ENCODE measurements at regions of chr16 and their contacts with region 1.

Region 1: GRCh38 chr16:89171463-89172170 is at the start of gene CDH15:
- DNase-seq: peak; percentile 99
- ATAC-seq: peak; percentile 88
- H3K4me3 Mint-ChIP-seq: peak within 1 kb of the TSS; percentile 75
- H3K27ac Mint-ChIP-seq: 0 out of 2 replicates have a peak within 1 kb of the TSS, but pooled peaks have one; percentile 2
- H3K4me1 Mint-ChIP-seq: peaks cover 14% of the 10 kb centered on the region
- H3K27me3 Mint-ChIP-seq: peaks cover 6% of the 10 kb centered on the region; the same call in 1 of the 2 replicates
- CTCF ChIP-seq: no peak
- total RNA-seq, gene CDH15: 0.41 to 0.76 TPM (median 0.46 TPM) in 3 replicates

Region 2: GRCh38 chr16:88811769-88812512 is 359.7 kb before region 1 on chr16 and contains the start of gene APRT:
- CTCF ChIA-PET with region 1: interaction called, 47 read pairs
- POLR2A ChIA-PET with region 1: interaction called, 4 read pairs
- DNase-seq: peak; percentile 95
- ATAC-seq: peak; percentile 61
- H3K4me3 Mint-ChIP-seq: peak within 1 kb of the TSS; percentile 87
- H3K27ac Mint-ChIP-seq: peak within 1 kb of the TSS; percentile 98
- H3K4me1 Mint-ChIP-seq: peaks cover 14% of the 10 kb centered on the region
- H3K27me3 Mint-ChIP-seq: no peaks in the 10 kb centered on the region
- CTCF ChIP-seq: no peak
- total RNA-seq, gene APRT: 272 to 288 TPM (median 282 TPM) in 3 replicates

Region 3: DNA sequence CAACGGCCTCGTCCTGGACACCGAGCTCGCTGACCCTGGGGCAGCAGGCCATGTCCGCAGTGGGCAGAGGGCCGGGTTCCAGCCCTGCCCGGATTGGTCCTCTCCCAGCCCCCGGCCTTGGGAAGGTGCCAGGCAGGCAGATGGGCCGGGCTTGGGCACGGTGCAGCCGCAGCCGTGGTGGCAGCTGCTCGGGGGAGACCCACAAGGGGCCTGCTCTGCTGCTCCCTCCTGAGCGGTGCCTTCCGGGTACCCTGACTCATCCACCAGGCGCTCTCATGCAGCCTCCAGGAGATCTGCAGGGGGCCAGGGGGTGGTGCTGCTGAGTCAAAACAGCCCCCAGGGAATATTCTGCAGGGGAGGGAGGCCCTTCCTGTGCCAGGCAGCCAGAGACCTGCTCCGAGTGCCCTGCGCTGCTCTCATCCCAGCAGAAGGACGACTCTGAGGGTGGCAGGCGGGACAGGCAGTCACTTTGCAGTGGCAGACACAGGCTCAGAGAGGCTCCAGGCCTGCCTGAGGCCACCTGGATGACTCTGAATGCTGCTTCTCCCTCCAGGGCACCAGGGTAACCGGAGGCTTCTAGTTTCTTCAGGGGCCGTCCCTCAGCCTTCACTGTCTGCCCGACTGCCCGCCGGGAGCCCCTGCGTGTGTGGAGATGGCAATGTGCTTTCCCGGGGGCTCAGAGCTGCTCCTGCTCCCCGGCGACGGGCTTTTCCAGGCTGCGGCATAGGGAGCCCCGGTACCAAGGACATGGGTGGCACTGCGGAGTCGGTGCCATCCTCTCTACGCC is 246.3 kb before region 1 on chr16:
- CTCF ChIA-PET with region 1: interaction called, 11 read pairs
- POLR2A ChIA-PET with region 1: no interaction called
- DNase-seq: peak; percentile 58
- ATAC-seq: peak; percentile 40
- H3K4me3 Mint-ChIP-seq: no peak overlapping the region
- H3K27ac Mint-ChIP-seq: no peak overlapping the region
- H3K4me1 Mint-ChIP-seq: peaks cover 14% of the 10 kb centered on the region
- H3K27me3 Mint-ChIP-seq: no peaks in the 10 kb centered on the region
- CTCF ChIP-seq: no peak

Region 4: DNA sequence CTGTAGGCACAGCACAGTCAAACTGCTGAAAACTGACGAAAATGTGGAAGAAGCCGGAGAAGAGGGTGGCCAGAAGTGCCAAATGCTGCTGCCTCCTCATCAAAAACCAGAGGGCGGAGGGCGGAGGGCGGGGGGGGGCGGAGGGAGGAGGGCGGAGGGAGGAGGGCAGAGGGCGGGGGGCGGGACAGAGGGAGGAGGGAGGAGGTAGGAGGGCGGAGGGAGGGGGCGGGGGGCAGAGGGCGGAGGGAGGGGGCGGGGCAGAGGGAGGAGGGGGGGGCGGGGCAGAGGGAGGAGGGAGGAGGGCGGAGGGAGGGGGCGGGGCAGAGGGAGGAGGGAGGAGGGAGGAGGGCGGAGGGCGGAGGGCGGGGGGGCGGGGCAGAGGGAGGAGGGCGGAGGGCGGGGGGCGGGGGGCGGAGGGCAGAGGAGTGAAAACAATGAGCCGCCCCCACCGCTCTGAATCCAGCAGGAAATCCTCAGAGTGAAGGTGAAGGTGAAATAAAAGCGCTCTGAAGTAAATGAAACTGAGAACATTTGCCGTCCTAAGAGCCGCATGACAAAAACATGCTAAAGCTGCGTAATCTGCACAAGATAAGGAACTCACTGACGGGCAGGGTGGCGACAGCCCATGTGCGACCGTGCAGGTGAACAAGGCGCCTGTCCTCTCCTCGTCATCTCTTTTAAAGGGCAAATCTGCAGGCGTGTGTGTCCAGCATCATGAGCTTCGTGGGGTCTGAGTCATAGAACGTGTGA is 172.0 kb before region 1 on chr16:
- CTCF ChIA-PET with region 1: interaction called, 12 read pairs
- POLR2A ChIA-PET with region 1: no interaction called
- DNase-seq: no peak
- ATAC-seq: peak; percentile 58
- H3K4me3 Mint-ChIP-seq: peak overlapping the region; percentile 47
- H3K27ac Mint-ChIP-seq: peak overlapping the region; percentile 67
- H3K4me1 Mint-ChIP-seq: peaks cover 20% of the 10 kb centered on the region
- H3K27me3 Mint-ChIP-seq: peaks cover 30% of the 10 kb centered on the region
- CTCF ChIP-seq: no peak

Region 5: DNA sequence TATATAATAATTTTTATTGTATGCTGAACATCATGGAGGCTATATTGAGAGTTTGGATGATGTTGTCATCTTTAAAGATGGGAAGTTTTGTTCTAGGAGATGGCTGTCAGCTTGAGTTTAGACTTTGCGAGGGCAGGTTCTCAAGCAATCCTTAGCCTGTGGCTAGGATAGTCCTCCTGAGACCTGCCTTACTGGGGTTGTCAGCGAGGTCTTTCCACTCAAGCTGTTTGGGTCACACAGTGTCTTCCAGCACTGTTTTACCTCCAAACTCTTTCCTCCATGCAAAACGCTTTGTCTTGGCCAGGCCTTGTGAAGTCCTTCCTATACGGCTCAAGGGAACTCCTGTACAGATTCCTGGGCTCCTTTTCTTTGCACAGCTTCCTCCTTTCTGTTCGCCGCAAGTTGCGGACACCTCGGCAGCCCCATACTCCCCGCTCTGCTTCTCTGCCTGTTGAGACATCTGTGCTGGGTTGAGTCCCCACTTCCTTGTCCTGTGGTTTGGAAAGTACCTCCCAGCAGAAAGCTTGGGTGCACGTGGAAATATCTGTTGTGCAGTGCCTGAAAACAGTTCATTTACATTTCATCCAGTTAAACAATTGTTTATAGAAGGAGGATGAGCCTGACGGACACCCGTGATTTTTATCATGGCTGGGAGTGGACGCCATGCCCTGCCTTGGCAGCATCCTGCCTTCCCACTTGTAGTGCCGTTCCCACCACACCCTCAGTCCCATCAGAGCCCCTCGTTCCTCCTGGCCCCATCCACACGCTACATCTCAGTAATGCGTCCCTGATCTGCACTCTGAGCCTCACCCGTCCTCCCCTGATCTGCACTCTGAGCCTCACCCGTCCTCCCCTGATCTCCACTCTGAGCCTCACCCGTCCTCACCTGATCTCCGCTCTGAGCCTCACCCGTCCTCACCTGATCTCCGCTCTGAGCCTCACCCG is 139.6 kb before region 1 on chr16:
- CTCF ChIA-PET with region 1: no interaction called
- POLR2A ChIA-PET with region 1: no interaction called
- DNase-seq: no peak
- ATAC-seq: no peak
- H3K4me3 Mint-ChIP-seq: no peak overlapping the region
- H3K27ac Mint-ChIP-seq: peak overlapping the region; percentile 70; the same call in 1 of the 2 replicates
- H3K4me1 Mint-ChIP-seq: peaks cover 9% of the 10 kb centered on the region
- H3K27me3 Mint-ChIP-seq: peaks cover 4% of the 10 kb centered on the region; the same call in 1 of the 2 replicates
- CTCF ChIP-seq: no peak

Region 6: DNA sequence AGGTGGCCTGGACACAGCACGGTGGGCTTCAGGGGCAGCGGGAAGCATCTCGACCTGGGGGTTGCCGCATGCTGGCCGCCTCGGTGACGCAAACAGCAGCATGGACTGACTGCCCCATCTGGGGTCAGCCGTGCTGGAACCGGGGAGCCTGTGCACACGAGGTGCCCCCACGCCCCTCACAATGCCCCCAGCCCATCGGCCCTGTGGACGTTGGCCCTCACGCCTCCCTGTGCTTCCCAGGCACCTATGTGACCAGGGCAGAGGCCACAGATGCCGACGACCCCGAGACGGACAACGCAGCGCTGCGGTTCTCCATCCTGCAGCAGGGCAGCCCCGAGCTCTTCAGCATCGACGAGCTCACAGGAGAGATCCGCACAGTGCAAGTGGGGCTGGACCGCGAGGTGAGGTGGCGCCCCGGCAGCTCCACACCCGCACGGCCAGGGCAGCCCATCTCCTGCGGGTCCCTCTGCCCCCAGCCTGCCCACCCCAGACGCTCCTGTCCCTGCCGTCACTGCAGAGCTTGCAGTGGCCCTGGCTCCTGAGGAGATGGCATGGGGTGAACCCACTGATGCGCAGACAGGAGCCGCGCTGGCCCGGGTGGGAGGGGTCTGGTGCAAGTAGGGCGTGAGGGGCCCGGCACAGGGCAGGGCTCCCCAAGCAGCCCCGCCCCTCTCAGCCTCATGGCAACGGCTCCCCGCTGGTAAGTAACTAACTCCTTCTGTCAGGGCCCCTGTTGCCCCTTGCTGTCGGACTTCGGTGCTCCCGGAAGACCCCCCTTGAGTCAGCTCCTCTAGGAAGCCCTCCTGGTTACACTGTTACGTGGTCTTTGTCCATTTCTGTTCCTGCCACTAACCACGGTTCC is 13.5 kb after region 1 on chr16:
- CTCF ChIA-PET with region 1: interaction called, 12 read pairs
- POLR2A ChIA-PET with region 1: no interaction called
- DNase-seq: no peak
- ATAC-seq: no peak
- H3K4me3 Mint-ChIP-seq: no peak overlapping the region
- H3K27ac Mint-ChIP-seq: no peak overlapping the region
- H3K4me1 Mint-ChIP-seq: no peaks in the 10 kb centered on the region
- H3K27me3 Mint-ChIP-seq: peaks cover 2% of the 10 kb centered on the region; the same call in 1 of the 2 replicates
- CTCF ChIP-seq: no peak

Region 7: DNA sequence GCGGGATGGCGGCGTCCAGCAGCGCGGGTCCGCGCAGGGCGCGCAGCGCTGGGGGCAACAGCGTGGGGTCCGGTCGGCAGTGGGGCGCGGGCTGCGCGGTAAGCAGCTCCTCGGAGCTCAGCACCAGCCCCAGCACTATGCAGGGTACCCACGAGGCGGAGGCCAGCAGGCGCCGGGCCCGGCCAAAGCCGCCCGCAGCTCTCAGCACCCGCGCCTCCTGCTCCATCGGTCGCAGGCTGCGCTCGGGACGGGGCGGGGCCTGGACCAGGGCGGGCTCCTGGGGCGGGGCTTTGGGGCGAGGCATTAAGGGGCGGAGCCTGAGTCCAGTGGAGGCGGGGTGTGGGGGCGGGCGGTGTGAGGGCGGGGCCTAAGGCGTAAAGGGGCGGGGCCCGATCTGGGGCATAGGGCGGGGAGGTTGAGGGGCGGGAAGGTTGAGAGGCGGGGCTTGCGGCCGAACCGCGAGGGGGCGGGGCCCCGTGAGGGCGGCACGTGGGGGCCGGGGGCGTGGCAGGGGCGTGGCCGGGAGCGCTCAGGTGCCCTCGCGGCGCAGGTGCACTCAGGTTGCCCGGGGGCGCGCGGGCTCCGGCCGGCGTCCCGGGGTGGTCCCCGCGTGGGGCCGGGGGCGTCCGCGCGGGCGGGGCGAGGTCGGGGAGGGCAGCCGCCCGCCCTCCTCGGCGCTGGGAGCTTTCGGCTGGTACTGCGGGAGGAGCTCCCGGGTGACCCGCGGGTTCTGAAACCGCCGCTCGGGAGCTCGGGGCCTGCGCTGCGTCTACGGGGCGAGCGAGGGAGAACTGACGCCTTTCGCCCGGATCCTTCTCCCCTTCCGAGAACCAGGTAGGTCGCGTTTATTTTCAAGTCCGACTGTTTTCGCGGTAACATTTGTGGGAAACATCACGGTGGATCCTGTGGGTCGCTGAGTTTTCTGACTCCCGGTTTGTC is 30.1 kb after region 1 on chr16:
- CTCF ChIA-PET with region 1: interaction called, 17 read pairs
- POLR2A ChIA-PET with region 1: interaction called, 4 read pairs
- DNase-seq: peak; percentile 93
- ATAC-seq: peak; percentile 92
- H3K4me3 Mint-ChIP-seq: peak overlapping the region; percentile 76
- H3K27ac Mint-ChIP-seq: no peak overlapping the region
- H3K4me1 Mint-ChIP-seq: no peaks in the 10 kb centered on the region
- H3K27me3 Mint-ChIP-seq: peaks cover 48% of the 10 kb centered on the region
- CTCF ChIP-seq: no peak